GM23248 (cell line): ENCODE measurements at regions of chr7 and their contacts with region 1.

Region 1: DNA sequence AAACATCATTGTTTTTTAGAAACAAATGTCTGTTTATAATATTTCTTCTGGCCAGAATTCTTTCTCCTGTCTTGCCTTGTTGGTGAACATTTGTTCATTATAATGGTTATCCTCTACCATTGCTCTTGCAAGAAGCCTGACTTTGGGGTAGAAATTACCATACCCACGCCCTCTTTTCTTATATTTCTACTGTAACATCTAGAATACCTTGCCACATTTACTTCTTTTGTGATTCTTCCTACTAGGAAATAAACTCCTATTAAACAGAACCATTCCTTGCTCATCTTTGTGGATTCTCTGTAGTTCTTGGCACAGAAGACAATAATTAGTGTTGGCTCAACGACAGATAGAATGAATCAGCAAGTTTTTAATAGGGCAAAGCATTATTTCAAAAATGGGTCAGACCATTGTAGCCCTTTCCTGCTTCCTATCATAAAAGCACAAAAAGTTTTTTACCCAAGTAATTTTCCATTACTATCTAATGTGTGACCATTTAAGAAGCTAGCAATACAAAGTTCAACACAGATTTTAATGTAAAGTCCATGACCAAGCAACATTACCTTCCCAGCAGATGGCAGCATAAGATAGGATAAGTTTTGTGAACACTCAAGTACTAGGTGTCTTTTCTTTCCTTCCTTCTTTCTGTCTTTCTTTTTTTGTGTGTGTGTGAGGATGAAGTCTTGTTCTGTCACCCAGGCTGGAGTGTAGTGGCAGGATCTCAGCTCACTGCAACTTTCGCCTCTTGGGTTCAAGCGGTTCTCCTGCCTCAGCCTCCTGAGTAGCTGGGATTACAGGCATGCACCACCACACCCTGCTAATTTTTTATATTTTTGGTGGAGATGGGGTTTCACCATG is 270.4 kb downstream of the HGF start:
- DNase-seq: peak; percentile 82
- H3K4me3 ChIP-seq: 0 out of 2 replicates have a peak overlapping the region, but pooled peaks have one; percentile 29
- H3K27ac ChIP-seq: peak overlapping the region; percentile 66
- H3K4me1 ChIP-seq: peaks cover 6% of the 10 kb centered on the region
- H3K27me3 ChIP-seq: no peaks in the 10 kb centered on the region

Region 2: DNA sequence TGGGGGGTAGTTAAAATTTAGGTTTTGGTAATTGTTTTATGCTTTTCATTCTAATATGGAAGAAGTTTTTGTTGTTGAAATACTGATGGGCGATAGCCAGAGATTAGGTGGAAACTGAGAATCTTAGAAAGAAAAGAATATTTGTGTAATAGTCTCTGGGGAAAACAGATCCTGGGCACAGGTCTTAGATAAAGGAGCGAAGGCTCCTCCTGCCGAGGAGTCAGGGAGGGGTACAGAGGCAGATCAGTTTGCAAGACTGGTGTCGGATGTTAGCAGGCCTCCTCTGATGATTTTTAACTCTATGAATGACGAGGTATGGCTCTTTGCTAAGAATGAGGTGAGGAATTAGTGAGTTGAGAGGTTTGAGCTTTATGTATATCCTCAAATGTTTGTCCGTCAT is 69.3 kb before region 1 on chr7:
- in situ Hi-C with region 1: no loop called
- DNase-seq: no peak
- H3K4me3 ChIP-seq: no peak overlapping the region
- H3K27ac ChIP-seq: no peak overlapping the region
- H3K4me1 ChIP-seq: 0 out of 2 replicates have a peak, but pooled peaks cover 5% of the 10 kb centered on the region
- H3K27me3 ChIP-seq: no peaks in the 10 kb centered on the region

Region 3: DNA sequence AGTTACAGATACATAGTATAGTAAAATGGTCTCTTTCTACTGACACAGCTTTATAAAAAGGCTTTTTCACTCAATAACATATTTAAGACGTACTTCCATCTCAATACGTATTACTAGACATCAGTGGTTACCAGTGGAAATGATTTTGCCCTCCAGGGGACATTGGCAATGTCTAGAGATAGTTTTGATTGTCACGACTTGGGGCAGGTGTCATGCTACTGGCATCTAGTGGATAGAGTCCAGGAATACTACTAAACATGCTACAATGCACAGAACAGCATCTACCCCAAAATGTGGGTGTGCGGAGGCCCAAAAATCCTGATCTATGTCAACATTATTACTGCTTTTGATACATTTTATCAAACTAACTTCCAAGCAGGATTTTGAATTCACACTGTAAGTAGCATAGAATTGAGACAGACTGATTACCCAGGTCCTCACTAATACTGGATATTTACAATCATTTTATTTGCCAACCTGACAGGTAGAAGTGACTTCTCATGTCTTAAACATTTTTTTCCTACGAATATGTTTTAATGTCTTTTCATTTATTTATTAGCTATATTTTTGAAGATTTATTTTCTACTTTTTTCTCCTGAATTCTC is 216.6 kb after region 1 on chr7:
- in situ Hi-C with region 1: loop called (anchors 25 kb)
- DNase-seq: peak; percentile 43
- H3K4me3 ChIP-seq: no peak overlapping the region
- H3K27ac ChIP-seq: no peak overlapping the region
- H3K4me1 ChIP-seq: peaks cover 12% of the 10 kb centered on the region
- H3K27me3 ChIP-seq: no peaks in the 10 kb centered on the region

Region 4: GRCh38 chr7:81956520-81956919 is 457.0 kb after region 1 on chr7:
- in situ Hi-C with region 1: loop called (anchors 25 kb)
- DNase-seq: peak; percentile 50
- H3K4me3 ChIP-seq: no peak overlapping the region
- H3K27ac ChIP-seq: no peak overlapping the region
- H3K4me1 ChIP-seq: no peaks in the 10 kb centered on the region
- H3K27me3 ChIP-seq: no peaks in the 10 kb centered on the region

Region 5: GRCh38 chr7:82019551-82020475 is 520.3 kb after region 1 on chr7:
- in situ Hi-C with region 1: loop called (anchors 10 kb)
- DNase-seq: no peak
- H3K4me3 ChIP-seq: no peak overlapping the region
- H3K27ac ChIP-seq: no peak overlapping the region
- H3K4me1 ChIP-seq: peaks cover 11% of the 10 kb centered on the region
- H3K27me3 ChIP-seq: no peaks in the 10 kb centered on the region

Region 6: DNA sequence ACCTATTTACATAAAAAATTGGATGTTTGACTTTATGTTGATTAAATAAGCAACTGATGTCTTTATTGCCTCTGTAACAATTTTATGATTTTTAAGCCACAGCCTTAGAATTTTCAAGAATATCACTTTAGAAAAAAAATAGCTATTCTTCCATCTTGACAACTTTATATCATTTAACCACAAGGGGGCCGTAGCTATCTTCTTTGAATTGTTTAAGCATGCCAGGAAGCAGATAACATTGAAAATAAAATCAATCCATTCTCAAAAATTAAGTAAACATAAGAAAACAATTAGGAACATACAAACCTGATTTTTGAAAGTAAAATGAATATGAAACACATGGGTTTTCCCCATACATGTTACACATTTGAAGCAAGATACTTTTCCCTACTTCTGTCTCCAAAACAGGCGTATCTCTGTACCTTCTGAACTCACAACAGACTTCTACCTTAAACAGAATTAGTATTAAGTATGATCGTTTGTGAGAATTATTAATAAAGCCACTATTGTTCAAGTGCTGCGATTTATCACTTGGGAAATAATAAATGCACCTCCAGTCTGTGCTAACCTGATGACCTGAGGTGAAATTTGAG is 735.1 kb after region 1 on chr7:
- in situ Hi-C with region 1: loop called (anchors 25 kb)
- DNase-seq: peak; percentile 72
- H3K4me3 ChIP-seq: no peak overlapping the region
- H3K27ac ChIP-seq: no peak overlapping the region
- H3K4me1 ChIP-seq: 0 out of 2 replicates have a peak, but pooled peaks cover 9% of the 10 kb centered on the region
- H3K27me3 ChIP-seq: no peaks in the 10 kb centered on the region

Region 7: DNA sequence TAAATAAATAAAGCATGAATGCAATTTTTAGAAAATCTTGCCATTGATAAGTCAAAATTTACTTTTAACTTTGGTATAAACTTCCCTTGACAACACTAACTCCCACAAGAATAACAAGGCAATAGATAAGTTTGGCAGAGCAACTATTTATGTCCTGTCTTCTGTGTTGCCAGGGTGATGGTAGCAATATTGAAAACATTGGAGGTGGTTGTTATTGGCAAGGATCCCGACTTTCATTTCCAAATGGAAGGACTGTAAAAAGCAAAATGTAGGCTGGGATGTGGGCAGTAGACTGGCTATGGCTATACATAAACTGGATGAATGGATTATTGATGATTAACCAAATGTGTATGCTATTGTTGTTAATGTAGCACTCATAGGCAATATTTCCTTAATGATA is 1078.9 kb after region 1 on chr7:
- in situ Hi-C with region 1: loop called (anchors 25 kb)
- DNase-seq: peak; percentile 33
- H3K4me3 ChIP-seq: no peak overlapping the region
- H3K27ac ChIP-seq: no peak overlapping the region
- H3K4me1 ChIP-seq: no peaks in the 10 kb centered on the region
- H3K27me3 ChIP-seq: peaks cover 32% of the 10 kb centered on the region

Region 8: DNA sequence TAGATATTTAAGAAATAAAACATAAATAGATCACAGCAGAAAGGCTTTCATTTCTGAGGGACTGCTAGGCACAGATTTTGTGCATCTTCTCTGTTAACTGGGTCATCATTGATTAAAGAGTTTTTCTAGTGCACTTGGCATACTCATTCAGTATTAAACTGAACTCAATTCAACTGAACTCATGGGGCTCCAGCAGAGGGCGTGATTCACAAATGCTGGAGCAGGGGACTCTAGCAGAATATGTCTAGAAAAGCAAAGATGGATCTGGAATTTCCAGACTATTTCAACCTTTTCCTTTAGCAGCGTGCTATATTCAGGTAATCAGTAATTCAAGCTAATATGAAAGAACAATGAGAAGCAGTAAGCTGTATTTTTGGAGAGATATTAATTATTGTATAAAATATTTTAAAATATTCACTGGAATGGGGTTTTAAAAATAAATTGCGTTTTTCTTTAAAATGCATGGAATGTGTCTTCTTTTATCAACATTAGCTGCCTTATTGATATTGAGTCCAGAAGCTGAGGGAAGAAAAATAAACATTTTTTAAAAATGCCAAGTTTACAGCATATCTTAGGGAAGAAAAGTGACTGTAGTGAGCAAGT is 1240.9 kb after region 1 on chr7:
- in situ Hi-C with region 1: loop called (anchors 25 kb)
- DNase-seq: peak; percentile 81
- H3K4me3 ChIP-seq: no peak overlapping the region
- H3K27ac ChIP-seq: no peak overlapping the region
- H3K4me1 ChIP-seq: peaks cover 6% of the 10 kb centered on the region; the same call in 1 of the 2 replicates
- H3K27me3 ChIP-seq: no peaks in the 10 kb centered on the region